Activated B cell treated with CpG ODN at 0.5 μM for 24 hours (primary cell): ENCODE measurements at regions of chr12 and their contacts with region 1.

Region 1: DNA sequence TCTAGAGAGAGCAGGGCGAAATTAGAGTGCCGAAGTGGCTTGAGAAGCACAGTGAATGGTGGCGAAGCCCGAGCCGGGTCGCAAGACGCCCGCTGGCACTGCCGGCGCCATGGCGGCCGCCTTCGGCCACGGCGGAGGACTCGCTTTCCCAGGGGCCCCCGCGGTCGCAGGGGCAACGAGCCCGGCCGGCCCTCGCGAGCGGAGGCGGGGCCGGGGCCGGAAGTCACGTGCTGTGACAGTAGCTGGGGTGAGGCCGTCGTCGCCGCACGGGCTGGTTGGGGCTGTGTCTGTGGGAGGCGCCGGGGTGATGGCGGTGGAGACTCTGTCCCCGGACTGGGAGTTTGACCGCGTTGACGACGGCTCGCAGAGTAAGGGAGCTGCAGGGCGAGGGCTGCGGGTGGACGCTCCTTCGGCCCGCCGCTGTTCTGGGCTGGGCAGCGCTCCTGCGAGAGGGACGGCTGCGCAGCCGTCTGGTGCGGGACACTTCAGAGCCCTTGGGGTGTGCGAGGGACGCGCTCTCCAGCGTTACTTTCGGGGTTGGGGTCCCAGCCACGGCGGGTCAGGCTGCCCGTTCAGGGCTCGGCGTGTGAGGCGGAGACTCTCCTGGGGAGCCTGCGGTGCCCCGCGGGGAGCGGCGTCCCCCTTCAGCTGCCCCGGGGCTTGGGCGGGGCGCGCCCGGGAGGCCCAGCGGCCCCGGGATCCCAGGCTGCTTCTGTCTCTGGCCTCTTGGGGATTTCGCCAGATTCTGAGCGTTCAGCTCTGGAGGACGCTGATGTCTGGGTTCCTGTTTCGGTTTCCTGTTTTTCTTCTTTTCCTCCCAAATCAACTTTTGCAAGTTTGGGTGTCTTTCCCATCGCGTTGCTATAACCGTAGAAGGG is at the start of gene WASHC4:
- DNase-seq: peak; percentile 95
- ATAC-seq: peak; percentile 89
- H3K4me3 Mint-ChIP-seq: peak within 1 kb of the TSS; percentile 96
- H3K27ac Mint-ChIP-seq: peak within 1 kb of the TSS; percentile 96
- H3K4me1 Mint-ChIP-seq: peaks cover 33% of the 10 kb centered on the region
- H3K27me3 Mint-ChIP-seq: no peaks in the 10 kb centered on the region
- CTCF ChIP-seq: no peak
- total RNA-seq, gene WASHC4: 105 and 128 TPM in 2 replicates

Region 2: GRCh38 chr12:103965590-103966504 is 1141.9 kb before region 1 on chr12 and contains the start of gene TDG:
- CTCF ChIA-PET with region 1: no interaction called
- POLR2A ChIA-PET with region 1: interaction called, 11 read pairs
- intact Hi-C with region 1: loop called (anchors 1 kb)
- DNase-seq: peak; percentile 85
- ATAC-seq: peak; percentile 95
- H3K4me3 Mint-ChIP-seq: peak within 1 kb of the TSS; percentile 97
- H3K27ac Mint-ChIP-seq: peak within 1 kb of the TSS; percentile 97
- H3K4me1 Mint-ChIP-seq: peaks cover 56% of the 10 kb centered on the region
- H3K27me3 Mint-ChIP-seq: no peaks in the 10 kb centered on the region
- CTCF ChIP-seq: no peak
- total RNA-seq, gene TDG: 31.5 and 34.2 TPM in 2 replicates

Region 3: GRCh38 chr12:104286538-104287482 is 820.9 kb before region 1 on chr12:
- CTCF ChIA-PET with region 1: no interaction called
- POLR2A ChIA-PET with region 1: interaction called, 13 read pairs
- intact Hi-C with region 1: loop called (anchors 1 kb)
- DNase-seq: peak; percentile 76
- ATAC-seq: peak; percentile 86
- H3K4me3 Mint-ChIP-seq: peak overlapping the region; percentile 100
- H3K27ac Mint-ChIP-seq: peak overlapping the region; percentile 99
- H3K4me1 Mint-ChIP-seq: peaks cover 40% of the 10 kb centered on the region
- H3K27me3 Mint-ChIP-seq: peaks cover 2% of the 10 kb centered on the region
- CTCF ChIP-seq: no peak

Region 4: GRCh38 chr12:104958009-104958945 is 149.5 kb before region 1 on chr12 and contains the start of gene SLC41A2:
- CTCF ChIA-PET with region 1: no interaction called
- POLR2A ChIA-PET with region 1: interaction called, 7 read pairs
- intact Hi-C with region 1: loop called (anchors 1 kb)
- DNase-seq: peak; percentile 90
- ATAC-seq: peak; percentile 86
- H3K4me3 Mint-ChIP-seq: peak within 1 kb of the TSS; percentile 93
- H3K27ac Mint-ChIP-seq: peak within 1 kb of the TSS; percentile 92
- H3K4me1 Mint-ChIP-seq: peaks cover 26% of the 10 kb centered on the region
- H3K27me3 Mint-ChIP-seq: peaks cover 2% of the 10 kb centered on the region
- CTCF ChIP-seq: no peak
- total RNA-seq, gene SLC41A2: 11.1 and 12.6 TPM in 2 replicates

Region 5: GRCh38 chr12:105120551-105120950 is 12.8 kb after region 1 on chr12:
- CTCF ChIA-PET with region 1: no interaction called
- POLR2A ChIA-PET with region 1: interaction called, 4 read pairs
- intact Hi-C with region 1: loop called (anchors 2 kb)
- DNase-seq: no peak
- ATAC-seq: no peak
- H3K4me3 Mint-ChIP-seq: no peak overlapping the region
- H3K27ac Mint-ChIP-seq: no peak overlapping the region
- H3K4me1 Mint-ChIP-seq: peaks cover 4% of the 10 kb centered on the region
- H3K27me3 Mint-ChIP-seq: no peaks in the 10 kb centered on the region
- CTCF ChIP-seq: no peak

Region 6: DNA sequence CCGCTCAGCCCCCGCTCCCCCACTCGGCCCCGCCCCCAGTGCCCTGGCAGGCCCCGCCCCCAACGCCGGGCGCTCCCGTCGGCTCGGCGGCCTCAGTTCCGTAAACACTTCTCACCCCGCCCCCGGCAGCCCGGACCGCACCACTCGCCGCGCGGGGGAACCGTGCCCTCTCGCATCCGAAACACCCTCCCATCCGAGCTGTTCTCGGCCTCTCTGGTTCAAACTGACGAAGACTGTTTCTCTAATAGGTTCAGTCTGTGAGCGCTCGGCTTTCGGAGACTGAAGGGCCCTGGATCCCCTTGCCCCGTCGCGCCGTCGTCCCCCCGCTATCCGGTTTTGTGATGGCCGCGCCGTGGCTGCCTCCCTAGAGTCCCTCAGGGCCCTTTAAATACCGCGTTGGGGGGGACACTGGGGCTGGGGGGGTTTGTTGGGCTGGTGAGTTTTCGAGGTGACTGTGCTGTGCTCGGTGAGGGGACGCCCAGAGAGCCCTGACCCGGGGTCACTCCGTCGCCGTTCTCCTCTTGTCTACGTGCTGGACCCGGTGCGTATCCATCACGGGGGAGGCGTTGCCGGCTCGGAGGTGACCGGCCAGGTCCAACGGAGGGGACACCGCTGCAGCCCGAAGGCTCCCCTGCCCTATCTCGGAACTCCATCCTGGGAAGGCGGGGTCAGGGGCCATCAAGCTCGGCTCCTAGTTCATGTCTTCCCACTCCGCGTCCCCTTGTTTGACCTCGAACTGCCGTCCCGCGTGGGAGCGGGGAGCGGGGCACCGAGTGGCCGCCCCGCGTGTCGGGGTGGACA is 1194.9 kb after region 1 on chr12 and contains the start of gene TCP11L2:
- CTCF ChIA-PET with region 1: no interaction called
- POLR2A ChIA-PET with region 1: interaction called, 4 read pairs
- intact Hi-C with region 1: loop called (anchors 10 kb)
- DNase-seq: peak; percentile 92
- ATAC-seq: peak; percentile 62
- H3K4me3 Mint-ChIP-seq: peak within 1 kb of the TSS; percentile 97
- H3K27ac Mint-ChIP-seq: peak within 1 kb of the TSS; percentile 100
- H3K4me1 Mint-ChIP-seq: peaks cover 71% of the 10 kb centered on the region
- H3K27me3 Mint-ChIP-seq: no peaks in the 10 kb centered on the region
- CTCF ChIP-seq: no peak
- total RNA-seq, gene TCP11L2: 48.0 and 52.5 TPM in 2 replicates